ENCODE measurements at regions of chr16 and their contacts with region 1.

Region 1: DNA sequence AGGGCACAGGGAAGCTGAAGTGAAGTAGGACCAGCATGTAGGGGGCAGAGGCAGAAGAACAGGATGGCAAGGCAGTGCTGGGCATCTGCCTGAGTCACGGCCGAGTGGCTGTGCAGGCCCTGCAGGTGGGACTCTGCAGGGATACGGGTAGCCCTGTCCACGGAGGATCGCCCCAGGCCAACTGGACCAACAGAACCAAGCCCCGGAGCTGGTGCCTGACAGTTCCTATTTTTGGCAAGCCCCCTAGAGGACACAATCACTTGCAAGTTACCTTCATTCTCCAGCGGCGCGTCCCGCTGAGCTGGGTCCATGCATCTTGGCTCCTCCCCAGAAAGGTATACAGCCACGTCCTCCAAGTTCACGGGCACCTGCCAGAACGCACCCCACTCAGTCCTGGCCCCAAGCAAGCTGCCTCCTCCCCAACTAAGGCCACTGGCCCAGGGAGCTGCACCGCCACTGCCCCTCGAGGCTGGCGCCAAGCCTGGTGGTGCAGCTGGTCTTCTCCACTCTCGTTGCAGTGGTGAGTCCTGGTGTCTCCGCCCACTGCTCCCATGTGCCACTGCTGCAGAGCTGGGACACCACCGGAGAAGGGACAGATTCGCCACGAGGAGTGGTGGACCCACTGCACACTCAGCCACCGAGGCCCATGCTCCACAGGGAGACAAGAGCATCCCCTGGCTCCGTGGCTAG is 6.6 kb downstream of the ZNF500 start:
- DNase-seq: no peak

Region 2: DNA sequence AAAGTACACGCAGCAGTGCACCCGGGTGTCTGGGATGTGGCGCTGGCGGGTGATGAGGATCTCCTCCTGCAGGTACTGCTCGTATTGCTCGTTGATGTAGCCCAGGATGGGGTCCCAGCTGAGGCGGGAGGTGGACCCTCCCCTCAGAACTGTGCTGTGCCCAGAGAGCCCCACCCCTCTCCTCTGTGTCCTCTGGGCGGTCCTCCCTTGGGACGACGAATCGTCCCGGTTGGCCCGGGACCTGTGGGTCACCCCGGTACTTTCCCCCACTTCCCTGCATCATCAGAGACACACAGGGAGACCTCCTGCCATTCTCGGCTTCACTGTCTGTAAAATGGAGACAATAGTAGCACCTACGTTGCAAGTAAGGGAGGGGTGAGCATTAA is 23.6 kb after region 1 on chr16:
- intact Hi-C with region 1: loop called (anchors 1 kb)
- DNase-seq: no peak